Ascending aorta (tissue), 2 donors: ENCODE measurements at regions of chr22 and their contacts with region 1.

Region 1: DNA sequence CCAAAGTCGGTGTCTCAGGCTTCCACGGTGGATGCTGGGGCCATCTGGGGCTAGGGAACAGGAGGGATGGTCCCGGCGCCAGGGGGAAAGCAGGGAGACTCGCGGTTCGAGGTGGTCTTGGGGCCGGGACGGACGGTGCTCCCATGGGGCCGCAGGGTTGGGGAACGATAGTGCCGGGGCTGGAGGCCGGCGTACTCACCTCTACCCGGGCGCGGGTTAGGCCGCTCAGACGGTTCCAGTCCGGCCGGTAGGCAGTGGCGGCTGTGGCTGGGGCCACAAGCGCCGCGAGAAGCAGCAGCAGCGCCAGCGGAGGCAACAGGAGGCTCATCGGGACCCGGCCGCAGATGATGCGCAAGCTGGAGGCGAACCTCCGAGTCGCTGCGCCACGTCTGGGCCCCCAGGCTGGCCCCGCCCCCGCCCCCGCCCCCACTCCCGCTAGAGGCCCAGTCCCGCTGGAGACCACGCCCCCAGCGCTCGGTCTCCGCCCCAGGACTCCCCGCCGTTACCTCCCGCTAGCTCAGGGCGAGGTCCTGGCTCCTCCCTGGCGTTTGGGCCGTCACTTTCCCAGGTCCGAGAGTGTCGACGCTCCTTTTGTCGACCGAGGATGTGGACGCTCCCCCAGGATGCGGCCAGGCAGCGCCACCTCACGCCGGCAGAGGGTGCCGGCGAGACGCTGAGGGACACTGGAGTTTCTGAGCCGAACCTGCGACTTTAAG is at the start of gene SELENOM:
- DNase-seq: peak; percentile 88 to 99
- H3K4me3 ChIP-seq: peak within 1 kb of the TSS; percentile 87 to 94
- H3K27ac ChIP-seq: peak within 1 kb of the TSS; percentile 98 to 99
- H3K4me1 ChIP-seq: peaks cover 0 to 35% of the 10 kb centered on the region in 2 donors
- H3K27me3 ChIP-seq: no peaks in the 10 kb centered on the region
- CTCF ChIP-seq: peak; percentile 97 to 99 (median 98)
- total RNA-seq, gene SELENOM: 1,262 TPM

Region 2: GRCh38 chr22:30591588-30592359 is 515.6 kb before region 1 on chr22 and contains the start of gene PES1:
- intact Hi-C with region 1: loop called (anchors 2 kb)
- DNase-seq: peak; percentile 81 to 98
- H3K4me3 ChIP-seq: peak within 1 kb of the TSS; percentile 59 to 85
- H3K27ac ChIP-seq: peak within 1 kb of the TSS; percentile 73 to 81
- H3K4me1 ChIP-seq: peaks cover 6 to 15% of the 10 kb centered on the region in 2 donors
- H3K27me3 ChIP-seq: no peaks in the 10 kb centered on the region
- CTCF ChIP-seq: no peak
- total RNA-seq, gene PES1: 24.7 TPM

Region 3: GRCh38 chr22:30908051-30908461 is 199.3 kb before region 1 on chr22:
- intact Hi-C with region 1: no loop called
- DNase-seq: no peak
- H3K4me3 ChIP-seq: no peak overlapping the region
- H3K27ac ChIP-seq: no peak overlapping the region
- H3K4me1 ChIP-seq: no peaks in the 10 kb centered on the region
- H3K27me3 ChIP-seq: no peaks in the 10 kb centered on the region
- CTCF ChIP-seq: no peak

Region 4: GRCh38 chr22:31089160-31090100 is 17.9 kb before region 1 on chr22:
- intact Hi-C with region 1: loop called (anchors 2 kb)
- DNase-seq: peak in 1 of 2 donors; percentile 78
- H3K4me3 ChIP-seq: peak overlapping the region in 1 of 2 donors; percentile 16
- H3K27ac ChIP-seq: peak overlapping the region; percentile 98
- H3K4me1 ChIP-seq: peaks cover 46 to 78% of the 10 kb centered on the region in 2 donors
- H3K27me3 ChIP-seq: no peaks in the 10 kb centered on the region
- CTCF ChIP-seq: peak; percentile 73 to 83 (median 81)

Region 5: DNA sequence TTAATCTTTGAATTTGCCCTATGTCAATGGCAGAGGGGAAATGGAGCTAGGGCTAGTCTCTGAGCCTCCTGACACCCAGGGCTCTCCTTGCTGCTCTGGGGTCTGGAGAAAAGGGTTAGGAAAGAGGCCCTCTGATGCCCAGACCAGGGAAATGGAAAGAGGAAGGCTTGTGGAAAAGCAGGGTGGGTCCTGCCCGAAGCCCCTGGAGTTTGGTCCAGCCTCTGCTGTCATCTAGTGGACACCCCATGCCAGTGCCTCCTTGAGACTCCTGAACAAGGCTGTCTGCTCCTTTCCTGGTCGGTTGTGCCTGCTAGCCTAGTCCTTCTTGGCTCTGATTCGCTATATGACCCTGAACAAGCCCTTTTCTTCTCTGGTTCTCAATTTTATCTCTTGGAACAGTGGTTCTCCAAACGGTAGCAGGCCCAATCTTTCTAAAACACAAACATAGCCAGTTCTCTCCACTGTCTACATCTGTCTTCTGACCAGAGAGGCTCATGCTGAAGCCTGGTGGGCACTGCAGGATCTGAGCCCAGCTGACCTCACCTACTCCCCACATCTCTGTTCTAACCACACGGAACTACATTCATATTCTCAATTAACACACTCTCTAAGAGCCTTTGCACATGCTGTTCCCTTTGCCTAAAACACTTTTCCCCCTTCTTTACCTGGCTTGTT is 41.8 kb after region 1 on chr22:
- intact Hi-C with region 1: loop called (anchors 1 kb)
- DNase-seq: peak in 1 of 2 donors; percentile 87
- H3K4me3 ChIP-seq: no peak overlapping the region
- H3K27ac ChIP-seq: peak overlapping the region; percentile 71 to 81
- H3K4me1 ChIP-seq: peaks cover 5 to 13% of the 10 kb centered on the region in 2 donors
- H3K27me3 ChIP-seq: no peaks in the 10 kb centered on the region
- CTCF ChIP-seq: peak; percentile 90 to 93 (median 90)

Region 6: DNA sequence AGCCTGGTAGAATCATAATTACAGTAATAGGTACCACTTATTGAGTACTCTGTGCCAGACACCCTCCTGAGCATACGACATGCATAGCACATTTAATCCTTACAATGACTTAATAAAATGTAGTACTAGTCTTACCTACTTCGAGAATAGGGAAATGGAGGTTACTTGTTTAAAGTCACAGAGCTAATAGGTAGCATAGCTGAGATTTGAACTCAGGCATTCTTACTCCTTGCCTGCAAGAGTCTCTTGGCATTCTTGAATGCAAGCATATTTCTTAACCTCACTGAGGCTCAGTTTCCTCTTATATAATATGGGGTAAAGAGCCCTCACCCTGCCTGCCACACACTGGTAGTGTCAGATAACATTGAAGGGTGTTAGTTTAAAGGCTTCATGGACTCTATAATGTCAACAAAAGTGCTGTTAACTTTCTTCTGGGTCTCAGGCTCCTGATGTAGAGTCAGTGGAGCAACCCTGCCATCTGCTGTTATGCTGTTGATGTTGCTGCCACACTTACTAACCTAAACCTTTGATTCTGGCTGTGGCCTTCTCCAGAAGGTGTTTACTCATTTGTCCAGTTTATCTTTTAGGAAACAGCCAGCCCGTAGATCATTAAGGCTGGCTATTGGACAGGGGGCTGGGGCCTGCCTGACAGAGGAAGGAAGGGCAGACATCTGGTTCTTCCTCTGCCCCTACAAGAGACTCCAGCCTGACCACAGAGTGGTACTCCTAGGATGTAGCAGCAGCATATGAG is 123.7 kb after region 1 on chr22:
- intact Hi-C with region 1: loop called (anchors 2 kb)
- DNase-seq: peak in 1 of 2 donors; percentile 75
- H3K4me3 ChIP-seq: no peak overlapping the region
- H3K27ac ChIP-seq: peak overlapping the region; percentile 80 to 82
- H3K4me1 ChIP-seq: peaks cover 0 to 5% of the 10 kb centered on the region in 2 donors
- H3K27me3 ChIP-seq: no peaks in the 10 kb centered on the region
- CTCF ChIP-seq: peak; percentile 68 to 82 (median 72)

Region 7: GRCh38 chr22:31272522-31273446 is 165.4 kb after region 1 on chr22:
- intact Hi-C with region 1: loop called (anchors 5 kb)
- DNase-seq: no peak
- H3K4me3 ChIP-seq: no peak overlapping the region
- H3K27ac ChIP-seq: peak overlapping the region; percentile 18 to 44
- H3K4me1 ChIP-seq: no peaks in the 10 kb centered on the region
- H3K27me3 ChIP-seq: no peaks in the 10 kb centered on the region
- CTCF ChIP-seq: peak; percentile 54 to 76 (median 70)